Activated CD4-positive, alpha-beta T cell treated with anti-CD3 and anti-CD28 coated beads, Interleukin-2, amount 10 ng/mL, durations not matched to agents 24 days and 14 days (primary cell): ENCODE measurements at regions of chr5 and their contacts with region 1.

Region 1: GRCh38 chr5:173887610-173888472 is at the start of gene CPEB4:
- DNase-seq: peak; percentile 99
- H3K4me3 Mint-ChIP-seq: peak within 1 kb of the TSS; percentile 96
- H3K27ac Mint-ChIP-seq: peak within 1 kb of the TSS; percentile 99
- H3K4me1 Mint-ChIP-seq: peaks cover 60% of the 10 kb centered on the region
- H3K27me3 Mint-ChIP-seq: no peaks in the 10 kb centered on the region
- total RNA-seq, gene CPEB4: 7.6 and 8.8 TPM in 2 replicates

Region 2: GRCh38 chr5:173781814-173782670 is 105.8 kb before region 1 on chr5:
- intact Hi-C with region 1: loop called (anchors 10 kb)
- DNase-seq: peak; percentile 86
- H3K4me3 Mint-ChIP-seq: peak overlapping the region; percentile 37
- H3K27ac Mint-ChIP-seq: peak overlapping the region; percentile 91
- H3K4me1 Mint-ChIP-seq: peaks cover 16% of the 10 kb centered on the region
- H3K27me3 Mint-ChIP-seq: no peaks in the 10 kb centered on the region

Region 3: DNA sequence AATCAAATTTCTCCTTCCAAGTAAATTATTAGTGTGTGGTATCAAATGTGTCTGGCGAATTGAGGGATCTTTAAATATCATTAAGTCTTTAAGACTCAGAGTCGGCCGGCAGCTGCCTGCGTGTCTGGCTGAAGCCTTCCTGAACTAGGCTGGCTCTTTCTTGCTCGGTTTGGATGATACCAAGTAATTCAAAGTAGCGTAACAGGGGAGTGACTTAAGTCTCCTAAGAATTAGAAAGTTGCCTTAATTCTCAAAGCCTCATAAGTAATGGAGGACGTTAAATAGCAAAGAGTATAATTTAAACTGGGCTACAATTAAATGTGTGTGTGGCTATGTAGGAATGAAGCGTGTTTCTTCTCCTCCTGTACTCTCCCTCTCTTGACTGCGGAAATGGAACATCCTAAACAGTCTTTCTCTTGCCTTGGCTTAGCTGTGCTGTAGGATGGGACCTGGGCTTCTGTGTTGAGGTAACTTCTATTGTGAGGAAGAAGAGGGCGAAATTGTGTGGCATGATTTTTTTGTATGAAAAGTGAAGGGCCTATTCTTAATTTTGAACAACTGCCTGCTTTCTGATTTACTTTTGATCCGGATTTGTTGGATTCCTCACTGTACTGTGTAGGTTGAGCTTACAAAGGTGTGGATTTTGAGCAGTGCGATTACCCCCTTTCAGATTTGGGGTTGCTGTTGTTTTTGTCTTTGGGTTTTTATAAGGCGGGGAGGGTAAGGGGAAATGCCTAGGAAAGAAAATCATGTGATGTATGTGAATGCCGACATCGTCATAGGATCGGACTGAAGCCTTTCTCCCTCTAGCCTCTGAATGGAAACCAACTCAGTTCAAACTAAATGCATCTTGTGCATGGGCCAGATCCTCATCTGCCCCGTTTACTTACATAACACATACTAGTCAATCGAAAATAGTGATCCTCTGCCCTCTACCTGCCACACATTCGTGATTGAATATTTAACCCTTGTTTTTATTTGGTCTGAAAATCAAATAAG is 30.2 kb after region 1 on chr5:
- intact Hi-C with region 1: loop called (anchors 1 kb)
- DNase-seq: peak; percentile 85
- H3K4me3 Mint-ChIP-seq: no peak overlapping the region
- H3K27ac Mint-ChIP-seq: no peak overlapping the region
- H3K4me1 Mint-ChIP-seq: peaks cover 7% of the 10 kb centered on the region
- H3K27me3 Mint-ChIP-seq: no peaks in the 10 kb centered on the region

Region 4: GRCh38 chr5:173972925-173973615 is 85.2 kb after region 1 on chr5:
- intact Hi-C with region 1: loop called (anchors 5 kb)
- DNase-seq: peak; percentile 91
- H3K4me3 Mint-ChIP-seq: peak overlapping the region; percentile 84
- H3K27ac Mint-ChIP-seq: no peak overlapping the region
- H3K4me1 Mint-ChIP-seq: peaks cover 13% of the 10 kb centered on the region
- H3K27me3 Mint-ChIP-seq: peaks cover 29% of the 10 kb centered on the region